ENCODE measurements at regions of chr1 and their contacts with region 1.

Region 1: DNA sequence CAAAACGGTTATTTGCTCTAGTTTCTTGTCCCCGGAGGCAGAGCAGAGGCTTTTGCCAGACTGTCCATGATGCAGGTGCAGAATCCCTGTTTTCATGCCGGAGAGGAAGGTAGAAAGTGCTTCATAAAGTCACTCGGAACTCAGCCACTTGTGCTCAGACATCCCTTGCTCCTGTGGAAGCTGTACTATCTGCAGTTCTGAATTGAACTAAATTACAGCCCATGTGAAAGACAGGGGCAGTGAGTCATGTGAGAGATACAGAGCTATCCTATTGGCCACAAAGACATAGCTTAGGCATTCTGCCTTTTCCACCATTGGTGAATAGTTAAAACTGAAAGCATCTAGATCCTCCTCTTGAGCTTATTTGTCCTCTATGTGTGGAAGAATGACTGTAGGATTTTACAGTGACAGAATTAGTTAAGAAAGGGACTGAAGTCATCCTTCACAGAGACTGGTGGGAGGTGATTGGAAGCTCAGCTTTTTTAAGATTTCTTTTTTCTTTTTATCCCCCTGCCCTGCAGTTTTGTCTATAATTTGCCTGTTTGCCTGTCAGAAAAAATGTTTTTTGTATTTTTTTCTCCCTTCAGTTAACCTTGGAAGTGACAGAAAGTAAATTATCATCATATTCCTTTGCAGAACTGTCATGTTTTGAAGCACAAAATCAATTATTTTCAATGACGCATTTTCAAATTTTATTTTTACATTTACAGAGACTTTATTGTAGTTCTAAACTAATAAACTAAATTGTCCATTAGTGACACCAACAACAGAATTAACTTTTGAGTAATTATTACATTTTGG is 298.6 kb downstream of the PTPRC start:
- DNase-seq: peak; percentile 95
- H3K4me3 ChIP-seq: peak overlapping the region; percentile 63 to 99 (median 93)
- H3K27ac ChIP-seq: peak overlapping the region; percentile 95
- H3K4me1 ChIP-seq: peaks cover 17% of the 10 kb centered on the region
- H3K27me3 ChIP-seq: no peaks in the 10 kb centered on the region
- CTCF ChIP-seq: no peak
- POLR2A ChIP-seq: peak; percentile 96

Region 2: DNA sequence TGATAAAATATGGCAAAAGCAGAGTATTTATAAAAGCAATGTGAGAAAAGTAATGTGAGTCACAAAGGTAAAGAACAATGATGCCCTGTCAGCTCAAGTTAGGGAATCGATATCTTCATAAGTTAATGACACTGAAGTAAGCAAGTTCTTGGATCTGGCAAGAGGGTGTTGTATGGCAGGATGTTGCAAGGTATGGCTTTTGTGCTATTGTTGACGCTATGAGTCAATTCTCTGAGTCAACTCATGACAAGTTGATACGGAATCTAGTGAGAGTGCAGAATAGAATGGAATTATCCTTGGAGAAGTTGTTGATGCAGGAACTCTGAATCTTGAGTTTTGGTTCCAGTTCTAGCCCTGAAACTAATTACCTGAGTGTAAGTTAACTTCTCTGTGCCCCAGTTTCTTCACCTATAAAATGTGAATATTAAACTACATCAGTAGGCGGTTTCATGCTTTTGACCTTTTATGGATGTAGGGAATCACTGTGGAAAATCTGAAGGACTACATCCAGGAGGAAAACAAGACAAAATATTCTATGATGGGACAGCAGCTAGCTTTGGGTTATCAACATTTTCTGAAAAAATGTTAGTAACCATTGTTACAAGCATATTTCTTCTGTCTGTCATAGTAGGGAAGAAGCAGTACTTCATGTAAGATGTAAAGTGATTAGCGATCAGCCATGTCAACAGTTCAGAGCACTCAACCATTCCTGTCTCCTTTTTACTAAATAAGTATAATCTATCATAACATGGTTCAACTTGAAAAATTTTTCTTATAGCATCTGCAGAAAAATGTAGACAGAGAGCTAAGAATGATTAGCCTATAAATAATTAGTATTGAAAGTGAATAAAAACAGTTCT is 493.8 kb before region 1 on chr1:
- CTCF ChIA-PET with region 1: no interaction called
- POLR2A ChIA-PET with region 1: no interaction called
- dilution Hi-C with region 1: no loop called
- intact Hi-C with region 1: loop called (anchors 10 kb)
- DNase-seq: peak; percentile 92
- H3K4me3 ChIP-seq: no peak overlapping the region
- H3K27ac ChIP-seq: peak overlapping the region; percentile 76
- H3K4me1 ChIP-seq: peaks cover 37% of the 10 kb centered on the region
- H3K27me3 ChIP-seq: no peaks in the 10 kb centered on the region
- CTCF ChIP-seq: no peak
- POLR2A ChIP-seq: peak; percentile 25

Region 3: GRCh38 chr1:198829944-198830343 is 107.5 kb before region 1 on chr1:
- CTCF ChIA-PET with region 1: interaction called, 5 read pairs
- POLR2A ChIA-PET with region 1: interaction called, 3 read pairs
- dilution Hi-C with region 1: no loop called
- intact Hi-C with region 1: loop called (anchors 2 kb)
- DNase-seq: peak; percentile 66
- H3K4me3 ChIP-seq: no peak overlapping the region
- H3K27ac ChIP-seq: no peak overlapping the region
- H3K4me1 ChIP-seq: peaks cover 13% of the 10 kb centered on the region
- H3K27me3 ChIP-seq: no peaks in the 10 kb centered on the region
- CTCF ChIP-seq: peak in 1 of 2 donors; percentile 25
- POLR2A ChIP-seq: no peak

Region 4: GRCh38 chr1:198909973-198910372 is 27.5 kb before region 1 on chr1:
- CTCF ChIA-PET with region 1: interaction called, 4 read pairs
- POLR2A ChIA-PET with region 1: interaction called, 4 read pairs
- dilution Hi-C with region 1: no loop called
- intact Hi-C with region 1: loop called (anchors 1 kb)
- DNase-seq: peak; percentile 66
- H3K4me3 ChIP-seq: no peak overlapping the region
- H3K27ac ChIP-seq: peak overlapping the region; percentile 26
- H3K4me1 ChIP-seq: peaks cover 66% of the 10 kb centered on the region
- H3K27me3 ChIP-seq: no peaks in the 10 kb centered on the region
- CTCF ChIP-seq: no peak
- POLR2A ChIP-seq: no peak

Region 5: DNA sequence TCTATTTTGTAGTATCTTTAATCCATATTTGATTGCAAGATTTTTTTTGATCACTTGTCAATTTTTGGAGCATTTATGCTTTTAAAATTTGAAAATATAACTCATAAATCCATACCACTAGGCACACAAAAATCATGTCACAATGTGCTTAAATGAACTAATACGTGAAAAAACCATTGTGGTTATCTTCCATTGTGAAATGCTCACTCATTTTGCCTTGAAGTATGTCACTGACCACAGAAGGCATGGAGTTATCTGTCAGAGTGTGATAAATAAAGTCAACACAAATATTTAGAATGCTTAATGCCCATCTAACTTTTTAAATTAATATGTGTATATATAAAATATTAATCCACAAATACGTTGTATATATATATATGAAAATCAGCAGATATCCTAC is 48.6 kb after region 1 on chr1:
- CTCF ChIA-PET with region 1: no interaction called
- POLR2A ChIA-PET with region 1: no interaction called
- dilution Hi-C with region 1: no loop called
- intact Hi-C with region 1: no loop called
- DNase-seq: no peak
- H3K4me3 ChIP-seq: no peak overlapping the region
- H3K27ac ChIP-seq: no peak overlapping the region
- H3K4me1 ChIP-seq: no peaks in the 10 kb centered on the region
- H3K27me3 ChIP-seq: no peaks in the 10 kb centered on the region
- CTCF ChIP-seq: no peak
- POLR2A ChIP-seq: no peak

Region 6: DNA sequence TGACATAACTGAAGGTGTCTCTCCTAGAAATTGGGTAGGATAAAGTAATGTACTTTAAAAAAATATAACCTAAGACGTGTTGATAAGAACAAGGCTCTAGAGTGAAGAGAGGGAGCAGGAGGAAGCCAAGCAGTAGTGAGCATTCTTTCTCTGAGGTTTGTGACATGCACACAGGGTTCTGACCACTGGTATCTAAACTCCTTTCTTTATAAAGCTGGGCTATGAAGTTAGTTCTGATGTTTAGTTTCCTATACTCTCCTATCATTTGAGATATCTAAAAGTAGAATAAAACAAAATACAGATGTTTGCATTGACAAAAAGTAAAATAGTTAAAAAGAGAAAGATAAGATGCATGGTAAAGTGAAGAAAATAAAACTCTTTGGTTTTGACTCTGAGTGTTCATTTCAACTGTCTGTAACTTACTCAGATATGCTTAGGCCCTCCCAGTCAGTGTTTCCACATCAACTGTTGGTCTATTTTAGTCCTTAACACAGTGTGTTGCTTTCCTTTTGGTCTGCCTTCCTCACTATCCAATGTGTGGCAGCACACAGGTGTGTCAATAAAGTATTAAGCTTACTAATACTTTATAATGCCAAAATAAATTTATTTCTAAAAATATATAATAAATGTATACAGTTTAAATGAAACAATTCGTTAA is 244.9 kb after region 1 on chr1:
- CTCF ChIA-PET with region 1: no interaction called
- POLR2A ChIA-PET with region 1: no interaction called
- dilution Hi-C with region 1: no loop called
- intact Hi-C with region 1: no loop called
- DNase-seq: no peak
- H3K4me3 ChIP-seq: no peak overlapping the region
- H3K27ac ChIP-seq: no peak overlapping the region
- H3K4me1 ChIP-seq: no peaks in the 10 kb centered on the region
- H3K27me3 ChIP-seq: no peaks in the 10 kb centered on the region
- CTCF ChIP-seq: no peak
- POLR2A ChIP-seq: no peak

Region 7: GRCh38 chr1:199218065-199218464 is 280.6 kb after region 1 on chr1:
- CTCF ChIA-PET with region 1: no interaction called
- POLR2A ChIA-PET with region 1: no interaction called
- dilution Hi-C with region 1: no loop called
- intact Hi-C with region 1: no loop called
- DNase-seq: no peak
- H3K4me3 ChIP-seq: no peak overlapping the region
- H3K27ac ChIP-seq: no peak overlapping the region
- H3K4me1 ChIP-seq: no peaks in the 10 kb centered on the region
- H3K27me3 ChIP-seq: no peaks in the 10 kb centered on the region
- CTCF ChIP-seq: no peak
- POLR2A ChIP-seq: no peak

Region 8: DNA sequence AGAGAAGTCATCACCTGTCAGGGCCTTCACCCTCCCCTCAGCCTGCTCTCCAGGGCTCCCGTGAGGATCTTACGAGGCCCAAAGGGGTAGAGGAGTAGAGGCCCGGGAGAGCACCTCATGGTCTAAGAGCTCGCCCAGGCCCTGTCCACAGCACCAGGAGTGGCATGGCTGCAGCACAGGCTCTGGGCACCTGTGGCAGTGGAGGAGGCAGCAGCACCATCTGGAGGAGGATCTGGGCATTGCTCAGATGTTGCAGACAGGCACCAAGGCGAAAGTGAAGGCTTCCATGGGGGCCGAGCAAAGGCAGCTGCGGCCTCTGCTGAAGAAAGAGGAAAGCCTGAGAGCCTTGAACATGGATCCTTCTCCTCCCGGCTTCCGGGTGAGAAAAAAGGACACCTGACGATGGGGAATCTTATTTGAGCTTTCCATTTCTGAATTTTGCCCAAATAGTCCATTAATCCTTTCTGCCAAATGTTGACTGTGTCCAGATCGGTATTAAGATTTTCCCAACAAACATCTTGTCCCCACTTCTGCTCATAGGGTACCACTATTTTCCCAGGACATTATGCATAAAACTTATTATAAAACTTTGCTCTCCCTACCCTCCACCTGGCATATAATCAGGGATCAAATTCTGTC is 306.1 kb after region 1 on chr1:
- CTCF ChIA-PET with region 1: interaction called, 16 read pairs
- POLR2A ChIA-PET with region 1: no interaction called
- dilution Hi-C with region 1: no loop called
- intact Hi-C with region 1: loop called (anchors 2 kb)
- DNase-seq: peak; percentile 58
- H3K4me3 ChIP-seq: no peak overlapping the region
- H3K27ac ChIP-seq: no peak overlapping the region
- H3K4me1 ChIP-seq: no peaks in the 10 kb centered on the region
- H3K27me3 ChIP-seq: no peaks in the 10 kb centered on the region
- CTCF ChIP-seq: peak; percentile 67 to 87
- POLR2A ChIP-seq: no peak

Region 9: DNA sequence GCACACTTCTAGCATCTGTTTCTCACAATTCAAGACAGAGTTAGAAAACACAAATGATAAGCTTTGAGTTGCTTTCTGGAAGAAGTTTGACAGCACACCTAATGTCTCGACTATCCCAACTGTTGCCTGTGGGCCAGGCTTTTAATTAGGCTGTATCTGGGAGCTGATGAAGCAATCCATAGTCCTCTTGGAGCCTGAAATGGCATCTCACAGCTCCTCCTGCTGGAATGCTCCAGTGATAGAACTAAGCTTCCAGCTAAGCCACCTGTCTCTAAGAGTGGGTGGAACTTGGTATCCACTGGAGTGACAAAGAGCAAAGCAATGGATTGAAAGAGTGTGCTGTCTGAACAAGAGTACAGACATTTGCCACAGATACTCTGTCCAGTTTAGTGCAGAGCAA is 484.8 kb after region 1 on chr1:
- CTCF ChIA-PET with region 1: interaction called, 18 read pairs
- POLR2A ChIA-PET with region 1: no interaction called
- dilution Hi-C with region 1: no loop called
- intact Hi-C with region 1: loop called (anchors 2 kb)
- DNase-seq: peak; percentile 53
- H3K4me3 ChIP-seq: no peak overlapping the region
- H3K27ac ChIP-seq: no peak overlapping the region
- H3K4me1 ChIP-seq: no peaks in the 10 kb centered on the region
- H3K27me3 ChIP-seq: no peaks in the 10 kb centered on the region
- CTCF ChIP-seq: peak in 1 of 2 donors; percentile 47
- POLR2A ChIP-seq: no peak

Region 10: GRCh38 chr1:200488375-200489165 is 1551.1 kb after region 1 on chr1:
- CTCF ChIA-PET with region 1: no interaction called
- POLR2A ChIA-PET with region 1: no interaction called
- dilution Hi-C with region 1: no loop called
- intact Hi-C with region 1: loop called (anchors 1 kb)
- DNase-seq: peak; percentile 72
- H3K4me3 ChIP-seq: no peak overlapping the region
- H3K27ac ChIP-seq: no peak overlapping the region
- H3K4me1 ChIP-seq: peaks cover 10% of the 10 kb centered on the region
- H3K27me3 ChIP-seq: peaks cover 0 to 2% of the 10 kb centered on the region in 2 experiments
- CTCF ChIP-seq: peak; percentile 71 to 73
- POLR2A ChIP-seq: no peak

Measured in endothelial cell of umbilical vein (primary cell).